Panc1 (cell line): ENCODE measurements at regions of chr16 and their contacts with region 1.

Region 1: GRCh38 chr16:70483426-70483825 is 29.0 kb downstream of the FCSK start:
- DNase-seq: no peak
- ATAC-seq: no peak
- H3K4me3 ChIP-seq: no peak overlapping the region
- H3K27ac ChIP-seq: no peak overlapping the region
- H3K4me1 ChIP-seq: no peaks in the 10 kb centered on the region
- H3K27me3 ChIP-seq: no peaks in the 10 kb centered on the region
- CTCF ChIP-seq: no peak

Region 2: GRCh38 chr16:70432723-70433457 is 50.5 kb before region 1 on chr16:
- CTCF ChIA-PET with region 1: interaction called, 13 read pairs
- POLR2A ChIA-PET with region 1: no interaction called
- in situ Hi-C with region 1: no loop called
- intact Hi-C with region 1: no loop called
- DNase-seq: no peak
- ATAC-seq: peak; percentile 18
- H3K4me3 ChIP-seq: peak overlapping the region; percentile 5 to 39; a peak in 3 of 4 replicates
- H3K27ac ChIP-seq: peak overlapping the region; percentile 91
- H3K4me1 ChIP-seq: peaks cover 78% of the 10 kb centered on the region
- H3K27me3 ChIP-seq: no peaks in the 10 kb centered on the region
- CTCF ChIP-seq: no peak